K562 (cell line): ENCODE measurements at regions of chr11 and their contacts with region 1.

Region 1: GRCh38 chr11:114738954-114739353 is 60.6 kb downstream of the NXPE2 start:
- DNase-seq: peak; percentile 29 to 54 (median 38)
- ATAC-seq: peak; percentile 80
- H3K4me3 ChIP-seq: no peak overlapping the region
- H3K27ac ChIP-seq: no peak overlapping the region
- H3K4me1 ChIP-seq: no peaks in the 10 kb centered on the region
- H3K27me3 ChIP-seq: no peaks in the 10 kb centered on the region
- CTCF ChIP-seq: peak; percentile 63 to 77 (median 66)
- EP300 ChIP-seq: no peak
- POLR2A ChIP-seq: no peak
- RAD21 ChIP-seq: peak; percentile 37 to 64

Region 2: GRCh38 chr11:114598461-114598860 is 140.5 kb before region 1 on chr11:
- CTCF ChIA-PET with region 1: no interaction called
- POLR2A ChIA-PET with region 1: no interaction called
- in situ Hi-C with region 1: loop called (anchors 10 kb)
- intact Hi-C with region 1: no loop called
- DNase-seq: no peak
- ATAC-seq: no peak
- H3K4me3 ChIP-seq: no peak overlapping the region
- H3K27ac ChIP-seq: no peak overlapping the region
- H3K4me1 ChIP-seq: no peaks in the 10 kb centered on the region
- H3K27me3 ChIP-seq: no peaks in the 10 kb centered on the region; a peak in 1 of 5 replicates
- CTCF ChIP-seq: no peak
- EP300 ChIP-seq: no peak
- POLR2A ChIP-seq: no peak
- RAD21 ChIP-seq: no peak